Caco-2 (cell line): ENCODE measurements at regions of chr20 and their contacts with region 1.

Region 1: DNA sequence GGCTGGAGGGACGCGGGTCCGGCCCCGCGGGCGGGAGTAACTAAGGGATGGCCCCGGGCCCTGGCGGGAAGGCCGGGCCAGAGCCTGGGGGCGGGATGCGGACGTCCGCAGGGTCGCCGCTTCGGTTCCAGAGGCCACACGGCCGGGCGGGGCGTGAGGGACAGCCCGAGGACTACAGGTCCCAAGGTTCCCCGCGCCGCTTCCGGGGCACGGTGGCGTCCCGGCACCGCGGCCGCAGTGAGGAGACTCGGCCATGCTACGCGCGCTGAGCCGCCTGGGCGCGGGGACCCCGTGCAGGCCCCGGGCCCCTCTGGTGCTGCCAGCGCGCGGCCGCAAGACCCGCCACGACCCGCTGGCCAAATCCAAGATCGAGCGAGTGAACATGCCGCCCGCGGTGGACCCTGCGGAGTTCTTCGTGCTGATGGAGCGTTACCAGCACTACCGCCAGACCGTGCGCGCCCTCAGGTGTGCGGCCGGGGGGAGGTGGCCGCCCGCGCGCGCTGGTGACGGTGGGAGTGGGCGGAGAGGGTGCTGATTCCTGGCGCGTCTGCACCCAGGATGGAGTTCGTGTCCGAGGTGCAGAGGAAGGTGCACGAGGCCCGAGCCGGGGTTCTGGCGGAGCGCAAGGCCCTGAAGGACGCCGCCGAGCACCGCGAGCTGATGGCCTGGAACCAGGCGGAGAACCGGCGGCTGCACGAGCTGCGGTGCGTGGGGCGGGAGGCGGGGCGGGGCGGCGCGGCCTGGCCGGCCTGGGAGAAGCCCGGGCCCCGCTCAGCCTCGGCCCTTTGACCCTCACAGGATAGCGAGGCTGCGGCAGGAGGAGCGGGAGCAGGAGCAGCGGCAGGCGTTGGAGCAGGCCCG is at the start of gene MRPS26:
- DNase-seq: peak; percentile 94 to 96
- H3K4me3 ChIP-seq: peak within 1 kb of the TSS; percentile 96
- H3K4me3 Mint-ChIP-seq: peak within 1 kb of the TSS; percentile 83
- H3K27ac Mint-ChIP-seq: peak within 1 kb of the TSS; percentile 37
- H3K4me1 ChIP-seq: peaks cover 14% of the 10 kb centered on the region
- H3K4me1 Mint-ChIP-seq: peaks cover 17% of the 10 kb centered on the region
- H3K27me3 ChIP-seq: no peaks in the 10 kb centered on the region
- H3K27me3 Mint-ChIP-seq: no peaks in the 10 kb centered on the region
- CTCF ChIP-seq: no peak
- total RNA-seq, gene MRPS26: 93.9 and 95.0 TPM in 2 replicates

Region 2: DNA sequence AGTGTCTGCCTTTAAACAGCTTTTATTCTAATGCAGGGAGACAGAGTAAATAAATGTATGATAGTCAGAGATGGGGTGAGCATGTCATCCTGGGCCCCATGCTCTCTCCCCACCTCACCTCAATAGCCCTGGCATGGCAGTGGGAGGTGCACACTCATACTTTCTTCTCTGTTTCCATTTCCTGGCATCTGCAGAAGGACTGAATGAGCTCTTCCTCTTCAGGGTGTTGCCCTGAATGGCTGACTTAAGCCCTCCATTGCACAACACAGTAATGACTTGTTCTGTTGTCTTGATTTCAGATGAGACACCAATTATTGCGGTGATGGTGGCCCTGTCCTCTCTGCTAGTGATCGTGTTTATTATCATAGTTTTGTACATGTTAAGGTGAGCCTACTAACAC is 59.6 kb before region 1 on chr20:
- CTCF ChIA-PET with region 1: no interaction called
- POLR2A ChIA-PET with region 1: no interaction called
- intact Hi-C with region 1: no loop called
- DNase-seq: no peak
- H3K4me3 ChIP-seq: no peak overlapping the region
- H3K4me3 Mint-ChIP-seq: no peak overlapping the region
- H3K27ac Mint-ChIP-seq: no peak overlapping the region
- H3K4me1 ChIP-seq: no peaks in the 10 kb centered on the region
- H3K4me1 Mint-ChIP-seq: no peaks in the 10 kb centered on the region
- H3K27me3 ChIP-seq: no peaks in the 10 kb centered on the region
- H3K27me3 Mint-ChIP-seq: no peaks in the 10 kb centered on the region
- CTCF ChIP-seq: no peak

Region 3: DNA sequence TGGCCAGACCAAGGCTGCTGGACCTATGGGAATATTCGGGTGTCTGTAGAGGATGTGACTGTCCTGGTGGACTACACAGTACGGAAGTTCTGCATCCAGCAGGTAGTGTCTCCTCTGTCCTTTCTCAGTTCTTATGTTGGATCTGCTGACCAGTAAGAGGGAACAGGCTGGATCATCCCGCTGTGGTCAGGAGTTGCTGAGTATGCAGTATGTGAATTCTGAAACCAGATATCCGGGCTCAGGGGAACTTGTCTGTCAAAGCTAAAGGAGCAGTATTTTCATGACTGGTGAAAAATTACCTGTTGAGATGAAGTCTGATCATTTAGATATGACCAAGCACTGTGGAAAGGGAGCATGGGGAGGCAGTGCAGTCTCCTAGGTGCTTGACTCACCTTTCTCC is 24.7 kb before region 1 on chr20:
- CTCF ChIA-PET with region 1: no interaction called
- POLR2A ChIA-PET with region 1: no interaction called
- intact Hi-C with region 1: loop called (anchors 1 kb)
- DNase-seq: no peak
- H3K4me3 ChIP-seq: no peak overlapping the region
- H3K4me3 Mint-ChIP-seq: no peak overlapping the region
- H3K27ac Mint-ChIP-seq: peak overlapping the region; percentile 95
- H3K4me1 ChIP-seq: peaks cover 45% of the 10 kb centered on the region
- H3K4me1 Mint-ChIP-seq: peaks cover 40% of the 10 kb centered on the region
- H3K27me3 ChIP-seq: no peaks in the 10 kb centered on the region
- H3K27me3 Mint-ChIP-seq: no peaks in the 10 kb centered on the region
- CTCF ChIP-seq: no peak

Region 4: GRCh38 chr20:3071610-3072529 is 25.8 kb after region 1 on chr20 and contains the start of gene OXT:
- CTCF ChIA-PET with region 1: no interaction called
- POLR2A ChIA-PET with region 1: interaction called, 11 read pairs
- intact Hi-C with region 1: no loop called
- DNase-seq: peak; percentile 79 to 85
- H3K4me3 ChIP-seq: peak within 1 kb of the TSS; percentile 74
- H3K4me3 Mint-ChIP-seq: peak within 1 kb of the TSS; percentile 58
- H3K27ac Mint-ChIP-seq: peak within 1 kb of the TSS; percentile 86
- H3K4me1 ChIP-seq: peaks cover 6% of the 10 kb centered on the region; the same call in 1 of the 2 replicates
- H3K4me1 Mint-ChIP-seq: peaks cover 13% of the 10 kb centered on the region
- H3K27me3 ChIP-seq: no peaks in the 10 kb centered on the region
- H3K27me3 Mint-ChIP-seq: no peaks in the 10 kb centered on the region
- CTCF ChIP-seq: no peak
- total RNA-seq, gene OXT: 1.9 and 2.7 TPM in 2 replicates